Activated T-helper 1 cell treated with anti-CD3 and anti-CD28 coated beads, Interleukin-12 subunit alpha, Interleukin-12 subunit beta, Interleukin-2, Interleukin-4 antibody, amounts not matched to agents 30 ng/mL and 10 ng/mL and 1 ng/mL, durations not matched to agents 14 hours and 24 hours and 36 hours (primary cell): ENCODE measurements at regions of chr20 and their contacts with region 1.

Region 1: GRCh38 chr20:62237801-62238571 is at the start of gene OSBPL2:
- DNase-seq: peak; percentile 100
- H3K4me3 Mint-ChIP-seq: peak within 1 kb of the TSS; percentile 85
- H3K27ac Mint-ChIP-seq: peak within 1 kb of the TSS; percentile 58
- H3K4me1 Mint-ChIP-seq: peaks cover 16% of the 10 kb centered on the region
- H3K27me3 Mint-ChIP-seq: no peaks in the 10 kb centered on the region
- total RNA-seq, gene OSBPL2: 27.0 and 31.6 TPM in 2 replicates

Region 2: DNA sequence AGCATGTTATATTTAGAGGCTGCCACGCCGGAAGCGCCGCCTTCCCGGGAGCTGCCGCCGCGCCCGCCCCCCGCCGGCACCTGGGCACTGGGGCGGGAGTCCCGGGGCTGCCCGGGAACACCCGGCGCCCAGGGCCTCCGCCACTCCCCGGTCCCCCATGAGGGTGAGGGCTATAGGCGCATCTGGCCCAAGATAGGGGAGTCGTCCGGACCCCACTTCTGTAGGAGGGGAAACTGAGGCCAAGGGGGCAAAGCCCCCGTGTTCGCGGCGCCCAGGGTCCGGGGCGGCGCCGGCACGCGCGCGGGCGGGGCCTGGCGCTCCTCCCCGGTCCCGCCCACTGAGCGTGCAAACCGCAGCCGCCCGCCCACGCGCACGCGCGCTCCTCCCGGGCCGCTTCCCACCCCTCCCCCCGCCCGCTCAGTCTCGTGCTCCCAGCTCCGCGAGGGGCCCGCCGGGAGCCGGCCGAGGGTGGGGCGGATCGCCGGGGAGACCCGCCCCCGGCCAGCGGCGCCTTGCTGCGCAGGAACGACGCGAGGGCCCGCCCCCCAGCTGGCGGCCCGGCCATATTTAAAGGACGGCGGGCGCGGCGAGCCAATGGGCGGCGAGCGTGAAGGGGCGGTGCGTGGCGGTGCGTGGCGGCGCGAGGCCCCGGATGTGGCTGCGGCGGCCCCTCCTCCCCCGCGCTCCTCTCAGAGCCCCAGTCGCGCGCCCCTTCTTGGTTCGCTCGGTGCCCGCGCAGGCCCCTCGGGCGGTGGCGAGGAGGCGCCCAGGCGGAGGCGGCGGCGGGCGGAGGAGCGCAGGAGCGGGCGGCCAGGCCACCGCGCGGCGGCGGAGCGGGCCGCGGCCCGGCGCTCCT is 116.0 kb before region 1 on chr20 and contains the start of gene LSM14B:
- intact Hi-C with region 1: loop called (anchors 1 kb)
- DNase-seq: peak; percentile 95
- H3K4me3 Mint-ChIP-seq: peak within 1 kb of the TSS; percentile 90
- H3K27ac Mint-ChIP-seq: peak within 1 kb of the TSS; percentile 94
- H3K4me1 Mint-ChIP-seq: peaks cover 32% of the 10 kb centered on the region
- H3K27me3 Mint-ChIP-seq: no peaks in the 10 kb centered on the region
- total RNA-seq, gene LSM14B: 39.6 and 43.2 TPM in 2 replicates

Region 3: DNA sequence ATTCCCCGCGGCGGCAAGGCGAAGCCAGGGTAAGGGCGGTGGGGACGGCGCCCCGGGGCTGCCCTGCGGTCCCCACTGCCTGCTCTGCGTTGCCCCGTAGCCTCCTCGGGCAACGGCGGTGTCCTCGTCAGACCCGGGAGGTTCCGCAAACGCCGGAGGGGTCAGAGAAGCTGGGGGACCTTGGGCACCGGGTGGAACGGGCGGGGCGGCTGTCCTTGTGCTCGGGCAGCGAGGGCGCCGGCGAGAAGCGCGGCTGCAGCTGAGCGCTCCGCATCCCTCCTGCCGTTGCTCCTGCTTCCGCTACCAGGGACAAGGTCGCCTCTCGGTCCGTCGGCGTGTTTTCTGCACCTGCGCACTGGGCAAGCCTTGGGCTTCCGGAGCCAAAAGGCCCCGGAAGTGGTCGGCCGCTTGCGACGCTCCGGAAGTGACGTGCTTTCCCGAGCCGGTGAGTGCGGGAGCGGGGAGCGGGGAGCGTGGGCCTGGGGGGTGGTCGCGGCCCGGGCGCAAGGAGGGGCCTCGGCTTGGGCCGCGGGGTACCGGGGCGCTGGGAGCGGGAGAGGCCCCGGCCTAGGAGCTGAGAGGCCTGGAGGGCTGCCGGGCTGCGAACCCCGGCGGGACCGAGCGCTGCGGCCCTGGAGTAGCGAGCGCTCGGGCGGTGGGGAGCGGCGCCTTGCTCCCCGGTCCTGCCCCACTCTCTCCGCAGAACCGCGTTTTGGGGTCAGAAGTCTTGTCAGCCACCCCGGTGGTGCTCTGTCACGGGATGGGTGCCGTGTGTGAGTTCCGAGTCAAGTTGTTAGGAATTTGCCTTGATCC is 55.2 kb before region 1 on chr20 and contains the start of gene MTG2:
- intact Hi-C with region 1: loop called (anchors 1 kb)
- DNase-seq: peak; percentile 95
- H3K4me3 Mint-ChIP-seq: peak within 1 kb of the TSS; percentile 92
- H3K27ac Mint-ChIP-seq: peak within 1 kb of the TSS; percentile 93
- H3K4me1 Mint-ChIP-seq: peaks cover 39% of the 10 kb centered on the region
- H3K27me3 Mint-ChIP-seq: no peaks in the 10 kb centered on the region
- total RNA-seq, gene MTG2: 45.4 and 46.3 TPM in 2 replicates

Region 4: GRCh38 chr20:62642040-62642665 is 404.2 kb after region 1 on chr20 and contains the start of gene SLCO4A1:
- intact Hi-C with region 1: loop called (anchors 5 kb)
- DNase-seq: peak; percentile 90
- H3K4me3 Mint-ChIP-seq: peak within 1 kb of the TSS; percentile 85
- H3K27ac Mint-ChIP-seq: peak within 1 kb of the TSS; percentile 78
- H3K4me1 Mint-ChIP-seq: peaks cover 16% of the 10 kb centered on the region
- H3K27me3 Mint-ChIP-seq: peaks cover 16% of the 10 kb centered on the region
- total RNA-seq, gene SLCO4A1: 47.6 and 49.8 TPM in 2 replicates